Sciatic nerve (tissue), 2 donors: ENCODE measurements at regions of chr10 and their contacts with region 1.

Region 1: GRCh38 chr10:110285501-110285900 is 19.2 kb downstream of the SMNDC1 start:
- DNase-seq: no peak
- ATAC-seq: no peak

Region 2: DNA sequence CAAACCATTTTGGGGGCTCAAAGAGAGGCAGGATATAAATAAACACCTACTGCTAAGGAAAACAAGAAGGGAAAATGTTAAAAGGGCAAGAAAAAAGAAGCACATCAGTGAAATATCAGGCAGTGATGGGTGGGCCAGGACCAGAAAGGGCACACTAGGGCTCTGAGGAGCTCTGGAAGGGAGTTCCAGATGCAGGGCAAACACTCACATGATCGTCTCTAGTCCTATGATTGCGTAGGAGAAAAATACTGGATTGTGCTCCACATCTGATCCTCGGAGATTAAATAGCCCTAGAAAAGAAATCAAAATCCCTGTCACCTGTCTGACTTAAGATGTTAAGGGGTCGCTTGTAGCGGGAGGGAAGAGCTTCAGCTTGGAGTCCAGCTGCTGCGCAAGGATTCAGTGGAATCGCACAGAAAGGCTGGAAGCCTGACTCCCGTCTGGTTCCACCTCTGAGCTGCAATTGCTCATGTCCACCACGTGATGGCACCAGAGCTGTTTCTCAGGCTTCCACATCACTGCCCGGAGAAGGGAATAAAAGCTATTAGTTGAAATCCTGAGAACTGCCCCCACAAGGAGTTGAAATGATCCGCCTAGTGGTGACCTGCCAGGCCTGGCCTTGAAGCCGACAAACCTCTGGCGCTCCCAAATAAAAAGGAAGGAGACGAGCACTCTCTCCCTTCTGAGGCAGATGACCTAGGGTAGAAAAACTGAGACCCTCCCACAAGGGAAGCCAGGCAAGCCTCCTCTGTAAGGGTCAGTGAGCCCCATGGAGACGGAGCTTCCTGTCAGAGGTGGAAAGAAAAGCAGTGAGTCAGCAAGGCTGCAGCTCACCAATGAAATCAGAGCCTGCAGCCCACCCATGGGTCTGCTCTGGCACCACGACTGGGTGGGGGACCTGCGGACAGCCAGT is 401.4 kb before region 1 on chr10:
- intact Hi-C with region 1: loop called (anchors 10 kb)
- DNase-seq: peak; percentile 83
- ATAC-seq: peak; percentile 91